Right cardiac atrium (tissue), 5 donors: ENCODE measurements at regions of chr9 and their contacts with region 1.

Region 1: GRCh38 chr9:76810377-76810957 is 46.2 kb downstream of the PCA3 start:
- DNase-seq: peak in 1 of 3 donors; percentile 23
- ATAC-seq: peak; percentile 77 to 80
- H3K4me3 ChIP-seq: no peak overlapping the region
- H3K27ac ChIP-seq: no peak overlapping the region
- H3K4me1 ChIP-seq: no peaks in the 10 kb centered on the region
- H3K27me3 ChIP-seq: no peaks in the 10 kb centered on the region

Region 2: DNA sequence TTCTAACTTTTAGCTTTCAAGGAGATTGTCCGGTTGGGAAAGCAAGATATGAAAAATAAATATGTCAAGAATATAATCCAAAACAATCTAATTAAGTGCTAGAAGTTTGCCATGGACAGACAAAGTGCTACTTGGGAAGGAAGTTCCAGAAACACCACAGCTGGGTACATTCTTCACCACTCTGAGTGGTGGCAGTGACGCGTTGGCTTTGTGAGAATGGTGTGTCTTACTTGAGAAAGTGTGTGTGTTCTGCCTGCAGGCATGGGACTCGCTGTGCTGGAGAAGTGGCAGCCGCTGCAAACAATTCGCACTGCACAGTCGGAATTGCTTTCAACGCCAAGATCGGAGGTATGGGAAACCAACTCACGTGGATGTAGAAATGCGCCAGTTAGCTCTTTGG is 742.8 kb before region 1 on chr9:
- intact Hi-C with region 1: no loop called
- DNase-seq: no peak
- ATAC-seq: no peak
- H3K4me3 ChIP-seq: no peak overlapping the region
- H3K27ac ChIP-seq: no peak overlapping the region
- H3K4me1 ChIP-seq: no peaks in the 10 kb centered on the region
- H3K27me3 ChIP-seq: no peaks in the 10 kb centered on the region

Region 3: DNA sequence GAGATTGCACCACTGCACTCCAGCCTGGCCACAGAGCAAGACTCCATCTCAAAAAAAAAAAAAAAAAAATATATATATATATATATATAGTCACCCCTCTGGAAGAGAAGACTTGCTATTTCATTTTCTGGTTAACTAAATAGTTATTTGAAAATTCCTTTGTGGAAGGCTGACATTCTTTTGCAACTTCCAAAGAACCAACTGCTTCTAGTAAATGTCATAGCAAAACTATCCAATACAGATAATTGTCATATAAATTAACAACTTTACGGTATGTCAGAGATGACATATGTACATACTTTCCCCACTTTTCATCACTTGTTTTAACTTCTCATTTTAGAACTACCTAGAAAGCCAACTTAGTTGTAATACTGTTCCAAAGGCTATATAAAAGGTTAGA is 44.5 kb after region 1 on chr9:
- intact Hi-C with region 1: no loop called
- DNase-seq: no peak
- ATAC-seq: no peak
- H3K4me3 ChIP-seq: no peak overlapping the region
- H3K27ac ChIP-seq: no peak overlapping the region
- H3K4me1 ChIP-seq: no peaks in the 10 kb centered on the region
- H3K27me3 ChIP-seq: no peaks in the 10 kb centered on the region

Region 4: GRCh38 chr9:76866689-76867088 is 56.2 kb after region 1 on chr9:
- intact Hi-C with region 1: no loop called
- DNase-seq: no peak
- ATAC-seq: no peak
- H3K4me3 ChIP-seq: no peak overlapping the region
- H3K27ac ChIP-seq: no peak overlapping the region
- H3K4me1 ChIP-seq: no peaks in the 10 kb centered on the region
- H3K27me3 ChIP-seq: no peaks in the 10 kb centered on the region

Region 5: DNA sequence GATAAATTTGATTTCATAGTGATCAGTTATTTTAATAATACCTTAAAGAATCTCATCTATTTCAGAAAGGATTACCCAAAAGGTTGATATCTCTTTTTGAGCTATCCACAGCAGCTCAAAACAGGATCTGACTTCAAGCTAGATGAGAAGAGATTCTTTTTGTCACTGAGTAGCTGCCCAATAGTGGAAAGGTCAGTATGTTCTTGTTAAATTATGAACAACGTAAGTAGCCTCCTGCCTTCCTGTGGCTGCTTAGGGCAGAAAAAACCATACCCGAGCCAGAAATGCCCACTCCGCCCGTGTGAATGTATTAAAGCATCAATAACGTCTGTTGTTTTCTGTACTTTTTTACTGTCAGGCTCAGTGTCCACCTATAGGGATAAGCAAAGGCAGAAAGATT is 146.8 kb after region 1 on chr9:
- intact Hi-C with region 1: no loop called
- DNase-seq: no peak
- ATAC-seq: no peak
- H3K4me3 ChIP-seq: no peak overlapping the region
- H3K27ac ChIP-seq: no peak overlapping the region
- H3K4me1 ChIP-seq: no peaks in the 10 kb centered on the region
- H3K27me3 ChIP-seq: no peaks in the 10 kb centered on the region

Region 6: DNA sequence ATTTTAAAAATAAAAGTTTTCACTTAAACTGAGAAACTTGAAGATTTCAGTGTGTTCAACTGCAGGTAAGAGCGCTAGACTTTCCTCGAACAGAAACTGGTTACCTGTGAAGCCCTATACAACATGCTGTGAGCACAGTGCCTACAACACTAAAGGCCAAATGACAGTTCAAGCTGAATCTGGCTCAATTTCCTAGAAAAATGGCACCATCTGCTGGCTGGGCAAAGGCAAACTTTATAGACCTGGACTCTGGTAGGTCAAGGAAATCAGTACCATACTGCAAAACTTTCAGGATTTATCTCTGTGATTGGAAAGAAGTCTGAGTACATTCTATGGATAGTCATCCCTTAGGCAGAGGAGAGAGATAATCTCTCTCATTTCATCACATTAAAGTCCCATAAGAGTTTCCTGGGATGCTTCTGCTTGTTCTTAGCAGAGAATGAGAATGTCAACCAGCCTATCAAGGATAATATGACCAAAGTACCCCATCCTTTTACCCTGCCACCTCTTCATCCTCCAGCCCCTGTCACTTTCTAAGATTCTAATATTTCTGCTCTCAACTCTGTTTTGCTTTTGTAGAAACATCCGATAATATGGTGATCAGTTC is 177.2 kb after region 1 on chr9:
- intact Hi-C with region 1: loop called in 1 of 4 experiments (anchors 5 kb)
- DNase-seq: no peak
- ATAC-seq: no peak
- H3K4me3 ChIP-seq: no peak overlapping the region
- H3K27ac ChIP-seq: no peak overlapping the region
- H3K4me1 ChIP-seq: no peaks in the 10 kb centered on the region
- H3K27me3 ChIP-seq: peaks cover 2% of the 10 kb centered on the region

Region 7: GRCh38 chr9:76996700-76997099 is 186.2 kb after region 1 on chr9:
- intact Hi-C with region 1: loop called (anchors 2 to 10 kb)
- DNase-seq: peak; percentile 46 to 85 (median 85)
- ATAC-seq: peak; percentile 86 to 91
- H3K4me3 ChIP-seq: no peak overlapping the region
- H3K27ac ChIP-seq: no peak overlapping the region
- H3K4me1 ChIP-seq: no peaks in the 10 kb centered on the region
- H3K27me3 ChIP-seq: no peaks in the 10 kb centered on the region

Region 8: GRCh38 chr9:77011973-77012821 is 201.7 kb after region 1 on chr9:
- intact Hi-C with region 1: loop called in 2 of 4 experiments (anchors 5 to 10 kb)
- DNase-seq: peak; percentile 54 to 83 (median 80)
- ATAC-seq: peak; percentile 68 to 72
- H3K4me3 ChIP-seq: peak overlapping the region; percentile 17
- H3K27ac ChIP-seq: no peak overlapping the region
- H3K4me1 ChIP-seq: peaks cover 2% of the 10 kb centered on the region
- H3K27me3 ChIP-seq: no peaks in the 10 kb centered on the region

Region 9: GRCh38 chr9:77149879-77150278 is 339.4 kb after region 1 on chr9:
- intact Hi-C with region 1: loop called in 3 of 4 experiments (anchors 5 to 10 kb)
- DNase-seq: no peak
- ATAC-seq: no peak
- H3K4me3 ChIP-seq: no peak overlapping the region
- H3K27ac ChIP-seq: no peak overlapping the region
- H3K4me1 ChIP-seq: no peaks in the 10 kb centered on the region
- H3K27me3 ChIP-seq: no peaks in the 10 kb centered on the region

Region 10: DNA sequence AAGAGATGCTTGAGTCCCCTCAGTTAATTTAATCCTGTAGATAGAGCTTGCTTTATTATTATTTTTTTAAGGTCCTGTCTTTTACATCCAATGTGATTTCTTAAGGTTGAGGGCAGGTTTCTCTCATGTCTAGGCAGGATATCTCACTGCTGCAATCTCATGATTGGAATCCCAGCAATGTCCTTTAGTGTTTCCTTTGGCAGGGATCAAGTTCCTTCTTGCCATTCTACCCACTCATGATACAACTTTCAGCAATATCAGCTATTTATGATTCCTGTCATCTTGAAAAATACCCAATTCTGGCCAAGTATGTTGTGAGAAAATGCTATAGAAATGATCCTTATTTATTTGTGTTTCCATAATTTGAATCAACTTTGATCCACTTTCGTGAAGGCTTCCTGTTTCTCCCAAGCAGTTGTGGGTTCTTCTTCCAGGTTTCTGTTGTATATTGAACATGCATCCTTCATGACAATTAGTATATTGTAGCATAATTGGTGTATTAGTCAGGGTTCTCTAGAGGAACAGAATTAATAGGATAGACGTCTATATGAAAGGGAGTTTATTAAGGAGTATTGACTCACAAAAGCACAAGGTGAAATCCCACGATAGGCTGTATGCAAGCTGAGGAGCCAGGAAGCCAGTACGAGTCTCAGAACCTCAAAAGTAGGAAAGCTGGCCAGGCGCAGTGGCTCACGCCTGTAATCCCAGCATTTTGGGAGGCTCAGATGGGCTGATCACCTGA is 348.5 kb after region 1 on chr9:
- intact Hi-C with region 1: loop called in 2 of 4 experiments (anchors 5 to 10 kb)
- DNase-seq: no peak
- ATAC-seq: no peak
- H3K4me3 ChIP-seq: no peak overlapping the region
- H3K27ac ChIP-seq: no peak overlapping the region
- H3K4me1 ChIP-seq: peaks cover 2% of the 10 kb centered on the region
- H3K27me3 ChIP-seq: no peaks in the 10 kb centered on the region